GM12878 (cell line): ENCODE measurements at regions of chr1 and their contacts with region 1.

Region 1: DNA sequence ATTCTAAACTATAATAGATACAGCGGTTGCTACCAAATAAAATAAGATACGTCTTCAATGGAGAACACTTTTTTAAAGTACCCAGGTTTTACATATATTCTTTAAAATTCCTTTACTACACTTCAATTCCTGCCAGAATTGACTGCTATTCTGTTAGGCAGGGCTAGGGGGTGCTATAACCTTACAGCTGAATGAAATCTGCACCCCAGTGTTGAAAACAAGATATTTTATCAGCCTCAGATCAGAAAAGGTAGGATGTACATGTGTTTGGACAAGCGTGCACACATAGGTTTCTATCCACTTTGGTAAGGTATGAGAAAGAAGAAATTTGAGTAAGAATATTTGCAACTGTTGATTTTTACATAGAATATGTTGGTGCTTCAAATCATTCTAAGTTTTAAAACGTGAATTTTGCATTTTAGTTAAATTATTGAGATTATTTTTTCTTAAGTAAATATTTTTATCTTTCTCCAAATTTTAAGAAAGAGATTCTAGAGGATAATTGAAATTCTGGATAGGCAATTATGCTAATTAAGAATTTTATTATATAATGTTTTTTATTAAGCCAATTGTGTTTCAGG is 490.8 kb upstream of the ADGRL4 start:
- DNase-seq: no peak
- ATAC-seq: peak; percentile 78
- H3K4me3 ChIP-seq: no peak overlapping the region
- H3K27ac ChIP-seq: no peak overlapping the region
- H3K4me1 ChIP-seq: no peaks in the 10 kb centered on the region
- H3K27me3 ChIP-seq: no peaks in the 10 kb centered on the region; a peak in 1 of 4 replicates
- CTCF ChIP-seq: peak; percentile 83 to 95 (median 85); a peak in 5 of 6 replicates
- EP300 ChIP-seq: no peak
- POLR2A ChIP-seq: no peak
- RAD21 ChIP-seq: peak; percentile 98

Region 2: DNA sequence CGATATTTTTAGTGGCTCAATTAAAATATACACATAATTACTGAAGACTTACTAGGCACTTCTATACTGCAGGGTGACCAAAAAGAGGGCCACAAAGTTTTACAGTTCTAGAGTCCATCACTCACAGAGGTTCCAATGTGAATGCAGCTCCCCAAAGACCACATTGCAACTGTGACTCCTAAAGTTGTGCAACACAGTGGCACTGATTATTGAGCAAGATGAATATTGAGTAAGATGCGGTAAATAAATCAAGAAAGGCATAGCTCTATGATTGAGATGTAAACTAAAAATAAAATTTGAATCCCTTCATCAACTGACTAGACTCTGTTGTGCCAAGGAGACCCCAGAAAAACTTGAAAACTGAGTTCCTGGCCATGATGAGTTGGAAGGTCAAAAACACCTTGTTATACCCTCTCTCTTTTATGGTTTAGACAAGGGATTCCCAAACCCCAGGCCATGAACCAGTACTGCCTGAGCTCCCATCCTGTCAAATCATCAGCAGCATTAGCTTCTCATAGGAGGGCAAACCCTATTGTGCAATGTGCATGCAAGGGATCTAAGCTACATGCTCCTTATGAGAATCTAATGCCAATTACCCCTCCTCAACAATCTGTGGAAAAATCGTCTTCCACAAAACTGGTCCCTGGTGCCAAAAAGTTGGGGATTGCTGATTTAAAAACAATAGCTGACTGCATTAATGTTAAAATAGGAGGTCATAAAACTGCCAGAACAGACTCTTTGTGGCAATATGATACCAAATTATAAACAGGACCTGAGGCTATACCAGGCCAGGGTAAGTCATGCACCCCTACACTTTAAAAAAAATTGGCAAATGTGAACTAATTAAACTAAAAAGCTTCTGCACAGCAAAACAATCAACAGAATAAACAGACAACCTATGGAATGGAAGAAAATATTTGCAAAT is 585.1 kb before region 1 on chr1:
- CTCF ChIA-PET with region 1: no interaction called
- POLR2A ChIA-PET with region 1: no interaction called
- RAD21 ChIA-PET with region 1: no interaction called
- SMC1A ChIA-PET with region 1: no interaction called
- in situ Hi-C with region 1: no loop called
- intact Hi-C with region 1: no loop called
- DNase-seq: no peak
- ATAC-seq: no peak
- H3K4me3 ChIP-seq: no peak overlapping the region
- H3K27ac ChIP-seq: no peak overlapping the region
- H3K4me1 ChIP-seq: no peaks in the 10 kb centered on the region
- H3K27me3 ChIP-seq: no peaks in the 10 kb centered on the region
- CTCF ChIP-seq: no peak
- EP300 ChIP-seq: no peak
- POLR2A ChIP-seq: no peak
- RAD21 ChIP-seq: no peak

Region 3: GRCh38 chr1:79532555-79532954 is 35.3 kb after region 1 on chr1:
- CTCF ChIA-PET with region 1: no interaction called
- POLR2A ChIA-PET with region 1: no interaction called
- RAD21 ChIA-PET with region 1: no interaction called
- SMC1A ChIA-PET with region 1: no interaction called
- in situ Hi-C with region 1: no loop called
- intact Hi-C with region 1: no loop called
- DNase-seq: no peak
- ATAC-seq: no peak
- H3K4me3 ChIP-seq: no peak overlapping the region
- H3K27ac ChIP-seq: no peak overlapping the region
- H3K4me1 ChIP-seq: no peaks in the 10 kb centered on the region
- H3K27me3 ChIP-seq: no peaks in the 10 kb centered on the region
- CTCF ChIP-seq: no peak
- EP300 ChIP-seq: no peak
- POLR2A ChIP-seq: no peak
- RAD21 ChIP-seq: no peak

Region 4: DNA sequence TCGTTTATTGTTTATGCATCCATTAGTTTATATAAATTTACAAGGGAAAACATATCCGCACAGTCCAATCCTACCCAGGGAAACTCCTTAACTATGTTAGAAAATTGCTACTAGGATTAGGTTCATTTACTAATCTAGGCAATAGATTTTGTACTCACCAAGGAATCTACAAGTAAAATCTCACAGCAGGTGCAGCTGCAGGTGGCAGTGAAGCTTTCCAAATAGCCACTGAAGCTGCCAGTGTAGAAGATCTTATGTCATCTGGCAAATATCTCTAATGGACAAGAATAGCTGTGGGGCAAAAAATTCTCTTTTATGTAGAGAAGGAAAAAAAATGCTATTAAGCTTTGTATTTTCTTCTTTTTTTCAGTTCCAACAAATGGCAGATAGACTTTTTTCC is 472.6 kb after region 1 on chr1:
- CTCF ChIA-PET with region 1: no interaction called
- POLR2A ChIA-PET with region 1: no interaction called
- RAD21 ChIA-PET with region 1: no interaction called
- SMC1A ChIA-PET with region 1: no interaction called
- in situ Hi-C with region 1: no loop called
- intact Hi-C with region 1: loop called (anchors 10 kb)
- DNase-seq: no peak
- ATAC-seq: no peak
- H3K4me3 ChIP-seq: no peak overlapping the region
- H3K27ac ChIP-seq: no peak overlapping the region
- H3K4me1 ChIP-seq: no peaks in the 10 kb centered on the region
- H3K27me3 ChIP-seq: no peaks in the 10 kb centered on the region
- CTCF ChIP-seq: no peak
- EP300 ChIP-seq: no peak
- POLR2A ChIP-seq: no peak
- RAD21 ChIP-seq: no peak

Region 5: DNA sequence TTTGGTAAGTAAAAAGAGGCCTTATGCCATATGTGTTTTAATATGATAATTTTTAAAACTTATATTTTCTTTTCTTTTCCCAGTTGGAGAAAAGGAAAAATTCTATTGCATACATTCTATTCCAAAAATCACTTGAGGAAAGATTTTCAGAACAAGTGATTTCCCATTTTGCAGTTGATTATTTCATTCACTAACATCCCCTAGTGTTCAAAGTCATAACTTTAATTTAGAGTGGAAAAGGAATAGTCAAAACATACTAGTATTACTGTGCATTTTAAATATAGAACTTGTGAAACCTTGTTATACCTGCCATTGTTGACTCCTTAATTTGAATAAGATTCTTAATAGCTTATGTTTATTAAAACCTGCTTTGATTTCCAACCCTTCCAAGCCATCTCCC is 666.9 kb after region 1 on chr1:
- CTCF ChIA-PET with region 1: no interaction called
- POLR2A ChIA-PET with region 1: no interaction called
- RAD21 ChIA-PET with region 1: no interaction called
- SMC1A ChIA-PET with region 1: no interaction called
- in situ Hi-C with region 1: no loop called
- intact Hi-C with region 1: loop called (anchors 10 kb)
- DNase-seq: no peak
- ATAC-seq: no peak
- H3K4me3 ChIP-seq: no peak overlapping the region
- H3K27ac ChIP-seq: no peak overlapping the region
- H3K4me1 ChIP-seq: no peaks in the 10 kb centered on the region
- H3K27me3 ChIP-seq: no peaks in the 10 kb centered on the region
- CTCF ChIP-seq: no peak
- EP300 ChIP-seq: no peak
- POLR2A ChIP-seq: no peak
- RAD21 ChIP-seq: no peak

Region 6: GRCh38 chr1:80218112-80218511 is 720.8 kb after region 1 on chr1:
- CTCF ChIA-PET with region 1: no interaction called
- POLR2A ChIA-PET with region 1: no interaction called
- RAD21 ChIA-PET with region 1: no interaction called
- SMC1A ChIA-PET with region 1: interaction called, 3 read pairs
- in situ Hi-C with region 1: no loop called
- intact Hi-C with region 1: loop called (anchors 5 kb)
- DNase-seq: no peak
- ATAC-seq: peak; percentile 93
- H3K4me3 ChIP-seq: no peak overlapping the region
- H3K27ac ChIP-seq: no peak overlapping the region
- H3K4me1 ChIP-seq: no peaks in the 10 kb centered on the region
- H3K27me3 ChIP-seq: no peaks in the 10 kb centered on the region
- CTCF ChIP-seq: peak; percentile 39 to 56 (median 49)
- EP300 ChIP-seq: no peak
- POLR2A ChIP-seq: no peak
- RAD21 ChIP-seq: peak; percentile 43